Activated naive CD4-positive, alpha-beta T cell treated with anti-CD3 and anti-CD28 coated beads for 36 hours (primary cell): ENCODE measurements at regions of chr6 and their contacts with region 1.

Region 1: GRCh38 chr6:122381497-122382265 is 17.8 kb upstream of the HSF2 start:
- DNase-seq: peak; percentile 79
- H3K4me3 Mint-ChIP-seq: no peak overlapping the region
- H3K27ac Mint-ChIP-seq: no peak overlapping the region
- H3K4me1 Mint-ChIP-seq: peaks cover 6% of the 10 kb centered on the region
- H3K27me3 Mint-ChIP-seq: peaks cover 3% of the 10 kb centered on the region

Region 2: DNA sequence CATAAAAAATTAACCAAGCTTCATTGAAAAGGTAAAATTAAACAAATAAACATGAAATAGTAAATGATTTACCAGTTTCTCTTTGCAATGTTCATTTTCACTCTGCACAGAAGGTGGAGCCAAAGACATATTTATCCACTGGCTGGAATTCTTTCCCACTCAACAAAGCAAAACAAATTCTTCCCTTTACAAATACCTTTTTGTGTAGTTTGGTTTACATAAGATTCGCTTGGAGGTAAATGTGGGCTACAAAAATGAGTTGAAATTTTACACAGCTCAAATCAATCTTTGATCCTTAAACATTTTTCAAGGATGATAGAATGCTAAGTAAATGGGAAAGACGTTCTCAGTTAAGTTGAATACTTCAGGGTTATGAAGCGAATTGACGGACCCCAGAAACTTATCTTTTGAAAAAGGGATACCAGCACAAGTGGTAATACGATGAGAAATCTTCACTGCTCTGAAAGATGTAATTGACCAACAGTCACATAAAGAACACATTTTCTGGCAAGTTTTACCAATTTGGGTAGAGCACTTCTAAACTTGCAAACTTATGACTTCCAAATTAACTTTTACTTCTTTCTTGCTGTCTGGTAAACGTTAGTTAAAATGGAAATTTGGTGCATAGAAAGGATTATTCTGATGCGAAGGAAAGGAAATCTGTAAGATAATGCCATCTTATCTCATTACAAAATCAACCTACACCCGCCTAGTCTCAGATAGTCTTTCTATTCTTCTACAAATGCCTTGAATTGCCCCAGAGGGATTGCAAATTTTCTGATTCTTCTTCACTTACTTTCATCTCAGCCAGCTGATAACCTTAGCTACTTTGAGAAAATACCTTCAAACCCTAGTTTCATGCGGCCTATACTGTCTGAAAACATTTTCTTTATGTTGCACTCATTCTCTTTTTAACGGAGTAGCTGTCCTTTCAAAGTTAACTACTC is 950.9 kb before region 1 on chr6:
- CTCF ChIA-PET with region 1: no interaction called
- intact Hi-C with region 1: loop called (anchors 2 kb)
- DNase-seq: no peak
- H3K4me3 Mint-ChIP-seq: no peak overlapping the region
- H3K27ac Mint-ChIP-seq: no peak overlapping the region
- H3K4me1 Mint-ChIP-seq: peaks cover 3% of the 10 kb centered on the region
- H3K27me3 Mint-ChIP-seq: no peaks in the 10 kb centered on the region

Region 3: GRCh38 chr6:122399384-122400158 is 17.9 kb after region 1 on chr6 and contains the start of gene HSF2:
- CTCF ChIA-PET with region 1: interaction called, 13 read pairs
- intact Hi-C with region 1: loop called (anchors 1 kb)
- DNase-seq: peak; percentile 97
- H3K4me3 Mint-ChIP-seq: peak within 1 kb of the TSS; percentile 97
- H3K27ac Mint-ChIP-seq: peak within 1 kb of the TSS; percentile 95
- H3K4me1 Mint-ChIP-seq: peaks cover 42% of the 10 kb centered on the region
- H3K27me3 Mint-ChIP-seq: no peaks in the 10 kb centered on the region
- total RNA-seq, gene HSF2: 22.0 to 27.0 TPM

Region 4: DNA sequence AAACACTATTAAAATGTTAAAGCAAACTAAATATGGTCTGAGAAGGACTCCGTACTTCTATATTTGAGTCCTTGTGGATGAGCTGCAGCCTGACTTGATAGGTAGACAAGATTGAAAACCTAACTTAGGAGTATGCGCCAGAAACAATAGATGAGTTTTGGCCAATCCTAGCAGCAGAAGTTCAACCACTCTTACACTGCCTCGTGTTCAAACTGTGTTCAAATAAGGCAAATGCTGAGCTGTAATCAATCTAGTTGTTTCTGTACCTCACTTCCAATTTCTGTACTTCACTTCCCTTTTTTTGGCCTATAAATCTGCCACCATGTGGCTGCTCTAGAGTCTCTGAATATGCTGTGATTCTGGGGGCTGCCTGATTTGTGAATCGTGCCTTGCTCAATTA is 103.1 kb after region 1 on chr6:
- CTCF ChIA-PET with region 1: interaction called, 4 read pairs
- intact Hi-C with region 1: loop called (anchors 1 kb)
- DNase-seq: no peak
- H3K4me3 Mint-ChIP-seq: no peak overlapping the region
- H3K27ac Mint-ChIP-seq: no peak overlapping the region
- H3K4me1 Mint-ChIP-seq: peaks cover 5% of the 10 kb centered on the region
- H3K27me3 Mint-ChIP-seq: no peaks in the 10 kb centered on the region

Region 5: GRCh38 chr6:122530440-122531046 is 148.9 kb after region 1 on chr6:
- CTCF ChIA-PET with region 1: interaction called, 66 read pairs
- intact Hi-C with region 1: loop called (anchors 1 kb)
- DNase-seq: peak; percentile 67
- H3K4me3 Mint-ChIP-seq: no peak overlapping the region
- H3K27ac Mint-ChIP-seq: no peak overlapping the region
- H3K4me1 Mint-ChIP-seq: no peaks in the 10 kb centered on the region
- H3K27me3 Mint-ChIP-seq: peaks cover 22% of the 10 kb centered on the region

Region 6: GRCh38 chr6:122580745-122581144 is 199.1 kb after region 1 on chr6:
- CTCF ChIA-PET with region 1: no interaction called
- intact Hi-C with region 1: no loop called
- DNase-seq: no peak
- H3K4me3 Mint-ChIP-seq: no peak overlapping the region
- H3K27ac Mint-ChIP-seq: no peak overlapping the region
- H3K4me1 Mint-ChIP-seq: no peaks in the 10 kb centered on the region
- H3K27me3 Mint-ChIP-seq: peaks cover 2% of the 10 kb centered on the region

Region 7: GRCh38 chr6:122730775-122731386 is 349.2 kb after region 1 on chr6:
- CTCF ChIA-PET with region 1: no interaction called
- intact Hi-C with region 1: loop called (anchors 2 kb)
- DNase-seq: peak; percentile 31
- H3K4me3 Mint-ChIP-seq: no peak overlapping the region
- H3K27ac Mint-ChIP-seq: no peak overlapping the region
- H3K4me1 Mint-ChIP-seq: no peaks in the 10 kb centered on the region
- H3K27me3 Mint-ChIP-seq: peaks cover 19% of the 10 kb centered on the region